Activated T-helper 1 cell treated with anti-CD3 and anti-CD28 coated beads, Interleukin-12 subunit alpha, Interleukin-12 subunit beta, Interleukin-2, Interleukin-4 antibody, amounts not matched to agents 30 ng/mL and 10 ng/mL and 1 ng/mL, durations not matched to agents 14 hours and 24 hours and 36 hours (primary cell): ENCODE measurements at regions of chr20 and their contacts with region 1.

Region 1: DNA sequence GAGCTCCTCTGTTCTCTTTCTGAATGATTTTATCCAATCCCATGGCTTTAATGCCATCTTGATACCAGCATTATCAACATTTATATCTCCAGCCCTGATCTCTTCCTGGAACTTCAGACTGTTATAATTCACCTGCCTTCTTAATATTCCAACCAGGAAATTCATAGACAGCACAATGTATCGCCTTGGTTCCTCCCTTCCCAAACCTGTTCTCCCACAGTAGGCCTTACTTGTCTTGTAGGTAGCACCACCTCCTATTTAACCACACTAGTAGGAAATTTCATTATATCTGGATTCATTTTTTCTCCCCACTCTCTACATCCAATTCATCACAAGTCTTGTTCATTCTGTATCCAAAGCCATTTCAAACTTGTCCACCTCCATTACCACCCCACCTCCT is 106.3 kb upstream of the SHLD1 start:
- DNase-seq: no peak
- H3K4me3 Mint-ChIP-seq: no peak overlapping the region
- H3K27ac Mint-ChIP-seq: no peak overlapping the region
- H3K4me1 Mint-ChIP-seq: peaks cover 12% of the 10 kb centered on the region
- H3K27me3 Mint-ChIP-seq: no peaks in the 10 kb centered on the region

Region 2: GRCh38 chr20:5612476-5613301 is 31.2 kb before region 1 on chr20:
- intact Hi-C with region 1: no loop called
- DNase-seq: no peak
- H3K4me3 Mint-ChIP-seq: no peak overlapping the region
- H3K27ac Mint-ChIP-seq: no peak overlapping the region
- H3K4me1 Mint-ChIP-seq: peaks cover 26% of the 10 kb centered on the region
- H3K27me3 Mint-ChIP-seq: peaks cover 3% of the 10 kb centered on the region

Region 3: DNA sequence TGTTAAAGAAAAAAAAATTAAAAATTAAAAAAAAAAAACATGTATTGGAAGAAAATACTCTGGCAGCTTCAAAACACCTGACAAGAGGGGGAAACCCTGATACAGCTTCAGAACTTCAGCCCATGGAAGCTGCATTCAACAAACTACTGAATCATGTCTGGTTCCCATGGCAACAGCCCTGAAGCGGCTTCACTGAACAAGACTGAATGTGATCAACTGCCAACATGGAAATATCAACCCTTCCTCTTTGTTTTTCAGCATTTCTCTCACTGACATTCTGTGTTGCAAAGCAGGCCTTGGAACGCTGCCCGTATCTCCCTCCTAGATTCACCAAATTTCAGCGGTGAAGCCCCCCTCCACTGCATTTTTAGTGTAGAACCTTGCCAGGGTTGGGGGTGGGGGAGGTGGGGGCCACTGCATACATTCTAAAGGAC is 15.0 kb after region 1 on chr20:
- intact Hi-C with region 1: loop called (anchors 2 kb)
- DNase-seq: no peak
- H3K4me3 Mint-ChIP-seq: no peak overlapping the region
- H3K27ac Mint-ChIP-seq: no peak overlapping the region
- H3K4me1 Mint-ChIP-seq: peaks cover 8% of the 10 kb centered on the region
- H3K27me3 Mint-ChIP-seq: no peaks in the 10 kb centered on the region